Mammary epithelial cell (primary cell): ENCODE measurements at regions of chr2 and their contacts with region 1.

Region 1: GRCh38 chr2:152012697-152013096 is 86.1 kb downstream of the CACNB4 start:
- DNase-seq: no peak
- H3K4me3 ChIP-seq: no peak overlapping the region
- H3K27ac ChIP-seq: no peak overlapping the region
- H3K4me1 ChIP-seq: no peaks in the 10 kb centered on the region
- H3K27me3 ChIP-seq: peaks cover 5% of the 10 kb centered on the region
- CTCF ChIP-seq: no peak

Region 2: GRCh38 chr2:151638191-151638933 is 374.3 kb before region 1 on chr2:
- CTCF ChIA-PET with region 1: no interaction called
- dilution Hi-C with region 1: no loop called
- in situ Hi-C with region 1: loop called in 1 of 2 experiments (anchors 25 kb)
- intact Hi-C with region 1: no loop called
- DNase-seq: no peak
- H3K4me3 ChIP-seq: no peak overlapping the region
- H3K27ac ChIP-seq: no peak overlapping the region
- H3K4me1 ChIP-seq: no peaks in the 10 kb centered on the region
- H3K27me3 ChIP-seq: no peaks in the 10 kb centered on the region
- CTCF ChIP-seq: no peak

Region 3: GRCh38 chr2:152047819-152048471 is 35.2 kb after region 1 on chr2:
- CTCF ChIA-PET with region 1: no interaction called
- dilution Hi-C with region 1: no loop called
- in situ Hi-C with region 1: no loop called
- intact Hi-C with region 1: no loop called
- DNase-seq: no peak
- H3K4me3 ChIP-seq: no peak overlapping the region
- H3K27ac ChIP-seq: no peak overlapping the region
- H3K4me1 ChIP-seq: no peaks in the 10 kb centered on the region
- H3K27me3 ChIP-seq: peaks cover 21% of the 10 kb centered on the region
- CTCF ChIP-seq: peak; percentile 43 to 45

Region 4: DNA sequence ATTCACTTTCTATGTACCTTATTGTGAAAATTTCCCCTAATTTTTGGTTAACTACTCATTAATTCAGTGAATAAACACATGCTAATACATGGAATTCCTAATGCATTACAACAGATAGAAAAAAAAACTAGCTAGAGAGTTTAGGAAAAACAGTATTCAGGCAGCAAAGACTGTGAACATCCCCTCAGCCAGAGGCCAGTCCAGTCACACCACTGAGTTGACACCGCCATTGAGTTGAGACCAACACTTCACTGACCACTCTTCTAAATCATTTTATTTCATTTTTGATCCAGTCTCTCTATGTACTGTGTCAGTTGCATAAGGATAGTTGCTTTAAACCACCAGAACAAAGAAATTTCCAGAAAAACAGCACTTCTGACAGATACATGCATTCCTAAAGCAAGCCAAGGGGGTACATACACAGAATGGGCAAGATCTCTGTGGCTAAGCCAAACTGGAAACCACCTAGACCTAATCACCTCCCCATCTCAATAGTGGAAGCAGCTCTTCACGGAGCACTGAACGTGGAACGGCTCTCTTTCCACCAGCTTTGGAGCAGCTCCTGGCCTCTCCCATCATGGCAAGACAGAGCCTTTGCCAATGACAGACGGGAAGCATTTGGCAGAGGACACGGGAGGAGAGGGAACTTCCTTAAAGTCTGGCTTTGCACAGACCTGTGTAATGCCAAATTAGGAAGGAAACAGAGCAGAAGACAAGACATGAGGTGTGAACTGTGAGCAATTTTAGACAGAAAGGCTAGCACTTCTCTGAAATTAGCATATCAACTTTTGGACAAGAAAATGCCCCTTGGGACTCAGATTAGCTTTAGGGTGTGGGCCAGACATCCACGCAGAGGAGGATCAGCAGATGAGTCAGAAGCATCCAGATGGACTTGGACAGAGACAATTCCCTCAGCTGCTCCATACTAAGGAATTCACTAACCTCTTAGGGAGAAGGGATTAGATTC is 49.7 kb after region 1 on chr2:
- CTCF ChIA-PET with region 1: no interaction called
- dilution Hi-C with region 1: no loop called
- in situ Hi-C with region 1: no loop called
- intact Hi-C with region 1: no loop called
- DNase-seq: peak; percentile 16
- H3K4me3 ChIP-seq: no peak overlapping the region
- H3K27ac ChIP-seq: no peak overlapping the region
- H3K4me1 ChIP-seq: no peaks in the 10 kb centered on the region
- H3K27me3 ChIP-seq: peaks cover 9% of the 10 kb centered on the region
- CTCF ChIP-seq: no peak